Body of pancreas (tissue), 4 donors: ENCODE measurements at regions of chr10 and their contacts with region 1.

Region 1: GRCh38 chr10:87887548-87888289 is 24.3 kb downstream of the PTEN start:
- DNase-seq: no peak
- ATAC-seq: no peak
- H3K4me3 ChIP-seq: no peak overlapping the region
- H3K27ac ChIP-seq: no peak overlapping the region
- H3K4me1 ChIP-seq: peaks cover 14% of the 10 kb centered on the region
- H3K27me3 ChIP-seq: no peaks in the 10 kb centered on the region
- CTCF ChIP-seq: no peak
- POLR2A ChIP-seq: no peak

Region 2: DNA sequence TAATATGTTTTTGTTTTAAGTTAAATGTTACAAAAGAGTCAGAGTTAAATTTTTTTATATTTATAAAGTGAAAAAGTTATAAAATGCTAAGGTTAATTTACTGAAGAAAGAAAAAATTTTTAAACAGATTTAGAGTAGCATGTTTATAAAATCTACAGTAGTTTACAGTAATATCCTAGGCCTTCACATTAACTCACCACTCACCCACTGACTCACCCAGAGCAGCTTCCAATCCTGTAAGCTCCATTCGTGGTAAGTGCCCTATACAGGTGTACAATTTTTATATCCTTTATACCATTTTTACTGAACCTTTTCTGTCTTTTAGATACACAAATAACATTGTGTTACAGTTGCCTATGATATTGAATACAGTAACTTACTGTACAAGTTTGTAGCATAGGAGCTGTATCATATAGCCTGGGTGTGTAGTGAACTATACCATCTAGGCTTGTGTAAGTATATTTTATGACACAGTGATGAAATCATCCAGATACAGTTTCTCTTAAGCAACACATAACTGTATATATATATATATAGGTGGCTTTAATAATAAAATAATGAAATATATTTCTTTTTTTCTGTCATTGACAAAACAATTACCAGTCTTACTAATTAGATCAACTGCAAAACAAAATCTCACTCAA is 55.3 kb after region 1 on chr10:
- intact Hi-C with region 1: loop called (anchors 10 kb)
- DNase-seq: no peak
- ATAC-seq: no peak
- H3K4me3 ChIP-seq: no peak overlapping the region
- H3K27ac ChIP-seq: no peak overlapping the region
- H3K4me1 ChIP-seq: peaks cover 14% of the 10 kb centered on the region
- H3K27me3 ChIP-seq: no peaks in the 10 kb centered on the region
- CTCF ChIP-seq: no peak
- POLR2A ChIP-seq: no peak

Region 3: GRCh38 chr10:88565072-88565471 is 677.4 kb after region 1 on chr10:
- intact Hi-C with region 1: no loop called
- DNase-seq: no peak
- ATAC-seq: no peak
- H3K4me3 ChIP-seq: no peak overlapping the region
- H3K27ac ChIP-seq: no peak overlapping the region
- H3K4me1 ChIP-seq: peaks cover 9% of the 10 kb centered on the region
- H3K27me3 ChIP-seq: no peaks in the 10 kb centered on the region
- CTCF ChIP-seq: peak in 6 of 7 experiments; percentile 9 to 44 (median 38)
- POLR2A ChIP-seq: no peak